ENCODE measurements at regions of chr7 and their contacts with region 1.

Region 1: GRCh38 chr7:954330-955238 is at the start of gene ADAP1:
- DNase-seq: peak; percentile 54
- H3K4me3 Mint-ChIP-seq: peak within 1 kb of the TSS; percentile 49
- H3K27ac Mint-ChIP-seq: no peak within 1 kb of the TSS
- H3K4me1 Mint-ChIP-seq: no peaks in the 10 kb centered on the region
- H3K27me3 Mint-ChIP-seq: peaks cover 7% of the 10 kb centered on the region
- total RNA-seq, gene ADAP1: 8.0 to 9.9 TPM

Region 2: DNA sequence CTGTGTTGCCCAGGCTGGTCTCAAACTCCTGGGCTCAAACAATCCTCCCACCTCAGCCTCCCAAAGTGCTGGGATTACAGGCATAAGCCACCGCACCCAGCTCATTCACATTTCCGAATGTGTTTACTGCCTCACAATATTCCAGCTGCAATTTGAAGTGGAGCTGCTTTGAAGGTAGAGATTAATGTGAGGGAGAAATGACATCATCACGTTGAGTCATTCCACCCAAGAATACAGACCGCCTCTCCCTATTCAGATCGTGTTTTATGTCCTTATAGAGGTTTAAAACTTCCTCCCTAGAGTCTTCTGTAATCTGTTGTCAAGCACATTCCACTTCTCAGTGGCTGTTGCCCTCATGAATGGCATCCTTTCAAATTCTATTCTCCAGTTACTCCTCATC is 334.5 kb before region 1 on chr7:
- CTCF ChIA-PET with region 1: no interaction called
- intact Hi-C with region 1: no loop called
- DNase-seq: peak; percentile 59
- H3K4me3 Mint-ChIP-seq: no peak overlapping the region
- H3K27ac Mint-ChIP-seq: peak overlapping the region; percentile 99
- H3K4me1 Mint-ChIP-seq: peaks cover 60% of the 10 kb centered on the region
- H3K27me3 Mint-ChIP-seq: no peaks in the 10 kb centered on the region

Region 3: DNA sequence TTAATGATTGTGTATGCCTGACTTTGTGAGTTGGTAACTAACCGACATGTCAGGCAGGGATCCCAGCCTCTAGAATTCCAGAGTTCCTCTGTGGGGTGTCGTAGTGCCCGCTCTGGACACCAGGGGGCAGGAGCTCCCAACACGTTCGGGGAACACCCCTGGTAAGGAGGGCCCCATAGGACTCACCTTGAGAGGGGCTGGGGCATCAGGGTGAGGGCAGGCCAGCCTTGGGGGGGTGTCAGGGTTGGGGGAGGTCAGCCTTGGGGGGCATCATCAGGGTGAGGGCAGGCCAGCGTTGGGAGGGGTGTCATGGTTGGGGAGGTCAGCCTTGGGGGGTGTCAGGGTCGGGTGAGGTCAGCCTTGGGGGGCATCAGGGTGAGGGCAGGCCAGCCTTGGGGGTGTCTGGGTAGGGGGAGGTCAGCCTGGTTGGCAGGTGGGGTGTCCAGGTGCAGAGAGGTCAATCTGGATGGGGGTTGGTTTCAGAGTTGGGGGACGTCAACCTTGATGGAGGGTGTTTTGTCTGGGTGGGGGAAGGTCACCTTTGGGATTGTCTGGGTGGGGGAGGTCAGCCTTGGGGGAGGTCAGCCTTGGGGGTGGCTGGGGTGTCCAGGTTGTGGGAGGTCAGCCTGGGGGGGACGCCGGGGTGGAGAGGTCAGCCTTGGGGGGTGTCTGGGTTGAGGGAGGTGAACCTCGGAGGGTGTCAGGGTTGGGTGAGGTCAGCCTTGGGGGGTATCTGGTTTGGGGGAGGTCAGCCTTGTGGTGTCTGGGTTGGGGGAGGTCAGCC is 167.9 kb before region 1 on chr7:
- CTCF ChIA-PET with region 1: no interaction called
- intact Hi-C with region 1: loop called (anchors 1 kb)
- DNase-seq: peak; percentile 84
- H3K4me3 Mint-ChIP-seq: no peak overlapping the region
- H3K27ac Mint-ChIP-seq: no peak overlapping the region
- H3K4me1 Mint-ChIP-seq: no peaks in the 10 kb centered on the region
- H3K27me3 Mint-ChIP-seq: no peaks in the 10 kb centered on the region

Region 4: DNA sequence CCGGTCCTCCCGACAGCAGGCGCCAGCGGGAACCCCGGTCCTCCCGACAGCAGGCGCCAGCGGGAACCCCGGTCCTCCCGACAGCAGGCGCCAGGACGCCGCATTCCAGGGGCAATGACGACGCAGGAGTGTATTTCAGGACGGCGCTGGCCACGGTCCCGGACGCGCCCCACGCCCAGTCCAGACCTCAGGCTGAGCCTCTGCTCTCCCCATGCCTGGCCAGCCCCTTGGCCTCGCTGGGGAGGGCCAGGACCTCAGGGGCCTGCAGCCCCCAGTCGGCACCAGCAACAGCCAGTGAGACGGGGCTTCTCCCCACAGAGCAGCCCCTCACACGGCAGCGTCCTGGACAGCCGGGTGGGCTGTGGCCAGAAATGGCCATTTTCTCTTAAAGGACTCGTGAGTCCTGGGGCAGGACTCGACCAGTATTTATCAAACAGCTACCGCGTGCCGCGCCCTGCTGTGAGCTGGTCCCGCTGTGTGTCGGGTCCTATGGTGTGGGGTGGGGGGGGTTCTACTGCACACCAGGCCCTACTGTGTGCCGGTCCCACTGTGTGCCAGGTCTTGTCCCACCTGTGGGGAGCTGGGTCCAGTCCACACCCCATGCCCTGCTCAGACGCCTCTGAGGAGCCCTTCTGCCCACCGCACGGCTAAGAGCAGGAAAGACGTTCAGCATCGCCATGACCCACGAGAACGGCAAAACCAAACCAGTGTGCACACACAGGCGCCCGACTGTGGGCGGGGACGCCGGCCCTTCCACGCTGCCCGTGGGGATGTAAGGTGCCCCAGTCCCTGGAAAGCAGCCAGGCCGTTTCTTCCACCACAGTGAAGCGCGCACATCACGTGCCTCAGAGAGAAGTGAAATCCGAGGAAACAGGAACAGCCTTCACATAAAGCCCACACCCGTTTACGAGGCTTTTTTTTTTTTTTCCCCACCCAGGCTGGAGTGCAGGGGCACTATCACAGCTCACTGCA is 44.9 kb before region 1 on chr7:
- CTCF ChIA-PET with region 1: interaction called, 19 read pairs
- intact Hi-C with region 1: loop called (anchors 1 kb)
- DNase-seq: peak; percentile 40
- H3K4me3 Mint-ChIP-seq: peak overlapping the region; percentile 32
- H3K27ac Mint-ChIP-seq: no peak overlapping the region
- H3K4me1 Mint-ChIP-seq: peaks cover 12% of the 10 kb centered on the region
- H3K27me3 Mint-ChIP-seq: no peaks in the 10 kb centered on the region

Measured in activated naive CD4-positive, alpha-beta T cell treated with anti-CD3 and anti-CD28 coated beads for 36 hours (primary cell).